Activated CD4-positive, alpha-beta memory T cell treated with anti-CD3 and anti-CD28 coated beads for 36 hours (primary cell): ENCODE measurements at regions of chr9 and their contacts with region 1.

Region 1: GRCh38 chr9:113578882-113579282 is 115.4 kb downstream of the RGS3 start:
- DNase-seq: peak; percentile 96
- H3K4me3 Mint-ChIP-seq: peak overlapping the region; percentile 85
- H3K27ac Mint-ChIP-seq: peak overlapping the region; percentile 96
- H3K4me1 Mint-ChIP-seq: peaks cover 75% of the 10 kb centered on the region
- H3K27me3 Mint-ChIP-seq: no peaks in the 10 kb centered on the region

Region 2: DNA sequence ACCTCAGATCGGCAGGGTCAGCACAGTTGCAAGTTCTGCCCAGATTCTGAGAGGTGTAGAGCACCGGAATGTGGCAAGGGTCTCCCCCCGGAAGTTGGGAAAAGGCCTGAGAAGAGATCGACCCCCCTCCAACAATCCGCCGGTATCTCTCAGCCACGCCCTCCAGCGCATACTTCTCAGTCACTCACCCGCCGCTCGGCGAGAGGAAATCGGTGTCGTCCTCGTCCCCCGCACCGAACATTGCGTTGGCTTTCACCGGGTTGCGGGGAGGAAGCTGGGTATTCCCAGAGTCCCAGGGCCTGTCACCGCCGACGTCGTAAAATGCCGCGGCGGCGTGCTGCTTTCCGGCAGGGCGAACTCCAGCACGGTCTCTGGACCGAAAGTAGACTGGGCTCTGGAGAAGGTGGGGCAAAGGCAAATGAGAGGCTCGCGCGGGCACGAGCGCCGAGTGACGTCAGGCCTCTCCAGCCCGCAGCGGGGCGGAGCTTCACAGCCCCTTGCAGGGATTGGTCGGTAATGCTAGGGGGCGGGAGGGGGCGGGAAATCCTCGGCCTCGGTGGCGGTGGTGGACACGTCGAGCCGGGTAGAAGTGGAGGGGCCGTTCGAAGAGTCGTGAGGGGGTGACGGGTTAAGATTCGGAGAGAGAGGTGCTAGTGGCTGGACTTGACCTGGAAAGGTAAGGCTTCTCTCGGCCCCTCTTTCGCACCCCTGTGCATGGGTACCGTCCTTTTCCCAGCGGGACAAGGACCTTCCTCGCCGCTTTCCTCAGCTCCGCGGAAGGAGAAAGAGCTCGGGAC is 357.7 kb before region 1 on chr9 and contains the starts of genes FKBP15 and SLC31A1:
- CTCF ChIA-PET with region 1: no interaction called
- POLR2A ChIA-PET with region 1: interaction called, 3 read pairs
- intact Hi-C with region 1: loop called (anchors 2 kb)
- DNase-seq: peak; percentile 98
- H3K4me3 Mint-ChIP-seq: peak within 1 kb of the TSS; percentile 94
- H3K27ac Mint-ChIP-seq: peak within 1 kb of the TSS; percentile 92
- H3K4me1 Mint-ChIP-seq: peaks cover 34% of the 10 kb centered on the region
- H3K27me3 Mint-ChIP-seq: no peaks in the 10 kb centered on the region
- total RNA-seq, gene FKBP15: 25.8 to 27.7 TPM
- total RNA-seq, gene SLC31A1: 12.1 to 12.5 TPM

Region 3: GRCh38 chr9:113410207-113410864 is 168.5 kb before region 1 on chr9 and contains the starts of genes C9orf43 and POLE3:
- CTCF ChIA-PET with region 1: interaction called, 4 read pairs
- POLR2A ChIA-PET with region 1: interaction called, 6 read pairs
- intact Hi-C with region 1: loop called (anchors 1 kb)
- DNase-seq: peak; percentile 97
- H3K4me3 Mint-ChIP-seq: peak within 1 kb of the TSS; percentile 98
- H3K27ac Mint-ChIP-seq: peak within 1 kb of the TSS; percentile 100
- H3K4me1 Mint-ChIP-seq: peaks cover 36% of the 10 kb centered on the region
- H3K27me3 Mint-ChIP-seq: no peaks in the 10 kb centered on the region
- total RNA-seq, gene C9orf43: 0.65 to 0.81 TPM
- total RNA-seq, gene POLE3: 44.3 to 45.0 TPM

Region 4: DNA sequence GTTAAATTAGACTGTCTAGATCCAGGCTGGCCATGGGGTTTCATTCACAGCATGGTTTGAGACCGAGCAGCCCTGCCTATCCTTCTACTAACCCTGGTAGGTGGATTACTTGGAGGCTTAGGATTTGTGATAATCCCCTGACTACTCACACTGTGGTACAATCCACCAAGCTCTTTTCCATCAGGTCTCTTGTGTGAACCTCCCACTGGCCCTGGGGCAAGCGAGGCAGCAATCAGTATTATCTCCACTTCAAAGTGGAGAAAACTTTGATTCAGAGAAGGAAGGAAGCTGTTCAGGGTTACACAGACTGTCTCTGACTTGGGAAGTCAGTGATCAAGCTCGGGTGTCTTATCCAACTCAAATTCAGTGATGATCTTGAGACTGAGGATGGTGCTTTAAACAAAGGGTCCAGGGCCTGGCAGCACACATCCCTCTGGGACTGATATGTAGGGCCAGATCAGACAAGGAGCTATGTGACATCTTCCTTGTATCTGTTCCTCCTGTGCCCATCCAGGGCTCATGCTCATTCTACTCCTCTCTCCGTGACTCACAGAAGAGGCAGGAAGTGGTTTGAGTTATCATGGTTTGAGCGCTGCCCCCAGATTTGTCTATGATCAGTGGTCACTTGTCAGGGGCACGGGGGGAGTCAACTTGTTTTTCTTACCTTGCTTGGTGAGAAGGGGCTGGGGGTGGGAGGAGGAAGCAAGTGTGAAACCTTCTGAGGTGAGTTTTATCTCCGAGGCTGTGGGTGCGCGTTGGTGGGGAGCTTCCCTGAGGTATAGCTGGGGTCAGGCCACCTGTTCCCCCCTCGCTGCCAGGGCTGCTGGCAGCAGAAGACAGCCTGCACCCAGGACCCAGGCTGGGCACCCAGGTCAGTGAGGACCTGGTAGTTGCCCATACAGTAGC is 66.8 kb before region 1 on chr9:
- CTCF ChIA-PET with region 1: interaction called, 22 read pairs
- POLR2A ChIA-PET with region 1: interaction called, 17 read pairs
- intact Hi-C with region 1: loop called (anchors 1 kb)
- DNase-seq: peak; percentile 89
- H3K4me3 Mint-ChIP-seq: peak overlapping the region; percentile 52
- H3K27ac Mint-ChIP-seq: peak overlapping the region; percentile 91
- H3K4me1 Mint-ChIP-seq: peaks cover 52% of the 10 kb centered on the region
- H3K27me3 Mint-ChIP-seq: peaks cover 2% of the 10 kb centered on the region

Region 5: DNA sequence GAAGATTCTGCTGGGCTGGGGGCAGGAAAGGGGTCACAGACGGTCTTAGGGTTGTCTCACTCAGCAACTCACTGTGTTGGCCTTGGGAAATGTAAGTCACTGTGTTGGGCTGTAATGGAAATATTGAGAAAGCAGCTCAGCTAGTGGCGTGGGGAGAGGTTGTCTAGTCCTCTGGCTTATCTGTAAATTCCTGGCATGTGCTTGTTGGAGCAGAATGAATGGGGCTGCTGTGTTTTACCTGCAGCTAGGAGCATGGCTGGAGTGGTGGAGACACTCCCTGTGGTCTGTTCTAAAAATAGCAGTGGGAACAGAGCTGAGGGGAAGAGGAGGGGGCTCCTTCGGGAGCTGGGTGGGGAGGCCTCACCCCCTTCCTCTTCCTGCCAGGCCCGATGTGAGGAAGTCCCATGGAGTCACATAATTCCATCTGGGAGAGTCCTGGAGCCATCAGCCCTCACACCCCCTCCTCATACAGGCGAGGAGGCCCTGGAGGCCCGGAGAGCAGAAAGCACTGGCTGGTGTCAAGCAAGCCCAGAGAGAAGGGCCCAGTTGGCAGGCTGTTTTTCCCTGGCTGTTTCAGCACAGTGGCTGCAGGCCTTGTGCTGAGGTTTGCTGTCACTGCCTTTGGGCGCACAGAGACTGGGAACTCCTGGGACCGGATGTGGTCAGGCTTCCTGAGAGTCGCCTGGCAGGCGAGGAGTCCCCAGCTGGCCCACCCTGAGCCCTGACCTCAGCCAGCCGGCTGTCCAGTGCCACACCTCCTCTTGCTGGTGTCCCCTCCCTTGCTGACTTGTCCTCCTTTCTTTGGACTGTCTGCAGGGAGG is 30.5 kb before region 1 on chr9:
- CTCF ChIA-PET with region 1: interaction called, 6 read pairs
- POLR2A ChIA-PET with region 1: no interaction called
- intact Hi-C with region 1: loop called (anchors 1 kb)
- DNase-seq: peak; percentile 53
- H3K4me3 Mint-ChIP-seq: no peak overlapping the region
- H3K27ac Mint-ChIP-seq: peak overlapping the region; percentile 75
- H3K4me1 Mint-ChIP-seq: peaks cover 26% of the 10 kb centered on the region
- H3K27me3 Mint-ChIP-seq: no peaks in the 10 kb centered on the region

Region 6: GRCh38 chr9:113591001-113591898 is 12.4 kb after region 1 on chr9:
- CTCF ChIA-PET with region 1: interaction called, 63 read pairs
- POLR2A ChIA-PET with region 1: interaction called, 3 read pairs
- intact Hi-C with region 1: no loop called
- DNase-seq: peak; percentile 86
- H3K4me3 Mint-ChIP-seq: no peak overlapping the region
- H3K27ac Mint-ChIP-seq: no peak overlapping the region
- H3K4me1 Mint-ChIP-seq: peaks cover 41% of the 10 kb centered on the region
- H3K27me3 Mint-ChIP-seq: no peaks in the 10 kb centered on the region